ENCODE measurements at regions of chr12 and their contacts with region 1.

Region 1: GRCh38 chr12:11730299-11731041 is 81.0 kb downstream of the ETV6 start:
- DNase-seq: peak; percentile 41
- ATAC-seq: peak; percentile 78
- H3K4me3 Mint-ChIP-seq: peak overlapping the region; percentile 74
- H3K27ac Mint-ChIP-seq: peak overlapping the region; percentile 89
- H3K4me1 Mint-ChIP-seq: peaks cover 96% of the 10 kb centered on the region
- H3K27me3 Mint-ChIP-seq: no peaks in the 10 kb centered on the region
- CTCF ChIP-seq: no peak

Region 2: GRCh38 chr12:11638315-11638916 is 92.1 kb before region 1 on chr12:
- CTCF ChIA-PET with region 1: no interaction called
- POLR2A ChIA-PET with region 1: interaction called, 16 read pairs
- intact Hi-C with region 1: no loop called
- DNase-seq: no peak
- ATAC-seq: no peak
- H3K4me3 Mint-ChIP-seq: no peak overlapping the region
- H3K27ac Mint-ChIP-seq: no peak overlapping the region
- H3K4me1 Mint-ChIP-seq: peaks cover 12% of the 10 kb centered on the region
- H3K27me3 Mint-ChIP-seq: no peaks in the 10 kb centered on the region
- CTCF ChIP-seq: no peak

Region 3: GRCh38 chr12:11672256-11673191 is 57.9 kb before region 1 on chr12:
- CTCF ChIA-PET with region 1: no interaction called
- POLR2A ChIA-PET with region 1: no interaction called
- intact Hi-C with region 1: no loop called
- DNase-seq: no peak
- ATAC-seq: no peak
- H3K4me3 Mint-ChIP-seq: no peak overlapping the region
- H3K27ac Mint-ChIP-seq: no peak overlapping the region
- H3K4me1 Mint-ChIP-seq: peaks cover 78% of the 10 kb centered on the region
- H3K27me3 Mint-ChIP-seq: no peaks in the 10 kb centered on the region
- CTCF ChIP-seq: no peak

Region 4: DNA sequence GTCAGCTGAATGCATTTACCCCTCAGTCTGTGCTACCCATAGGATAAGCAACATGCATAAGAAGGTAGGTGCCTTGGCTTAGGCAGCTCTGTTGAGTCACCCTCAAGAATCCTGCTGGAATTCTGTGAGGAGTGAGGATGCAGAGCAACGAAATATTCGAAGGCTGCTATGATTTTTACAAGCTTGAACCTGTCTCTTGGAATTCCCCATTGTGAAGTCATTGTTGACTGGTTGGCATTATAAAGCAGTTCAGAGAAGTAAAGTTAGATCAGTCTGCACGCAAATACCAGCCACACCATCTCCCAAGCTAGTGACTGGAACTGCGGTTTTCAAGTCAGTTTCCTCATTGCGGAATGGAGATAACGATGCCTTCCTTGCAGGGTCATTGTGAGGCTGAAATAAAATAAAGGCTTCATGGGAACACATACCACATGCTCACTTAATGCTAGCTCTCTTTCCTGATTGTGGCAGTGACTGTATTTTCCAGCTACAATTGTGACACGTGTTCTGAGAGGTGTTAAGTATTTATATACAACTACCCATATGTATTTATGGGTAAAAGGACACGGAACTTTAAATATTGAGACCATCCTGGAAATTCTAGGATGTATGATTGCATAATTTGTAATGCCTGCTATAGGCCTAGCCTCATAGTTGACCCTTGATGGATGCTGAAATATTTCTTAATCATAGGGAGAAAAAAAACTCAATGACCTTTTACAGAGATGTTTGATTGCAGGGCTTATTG is 15.7 kb after region 1 on chr12:
- CTCF ChIA-PET with region 1: interaction called, 8 read pairs
- POLR2A ChIA-PET with region 1: interaction called, 249 read pairs
- intact Hi-C with region 1: loop called (anchors 1 kb)
- DNase-seq: no peak
- ATAC-seq: peak; percentile 73
- H3K4me3 Mint-ChIP-seq: peak overlapping the region; percentile 67
- H3K27ac Mint-ChIP-seq: peak overlapping the region; percentile 93
- H3K4me1 Mint-ChIP-seq: peaks cover 97% of the 10 kb centered on the region
- H3K27me3 Mint-ChIP-seq: no peaks in the 10 kb centered on the region
- CTCF ChIP-seq: no peak

Region 5: DNA sequence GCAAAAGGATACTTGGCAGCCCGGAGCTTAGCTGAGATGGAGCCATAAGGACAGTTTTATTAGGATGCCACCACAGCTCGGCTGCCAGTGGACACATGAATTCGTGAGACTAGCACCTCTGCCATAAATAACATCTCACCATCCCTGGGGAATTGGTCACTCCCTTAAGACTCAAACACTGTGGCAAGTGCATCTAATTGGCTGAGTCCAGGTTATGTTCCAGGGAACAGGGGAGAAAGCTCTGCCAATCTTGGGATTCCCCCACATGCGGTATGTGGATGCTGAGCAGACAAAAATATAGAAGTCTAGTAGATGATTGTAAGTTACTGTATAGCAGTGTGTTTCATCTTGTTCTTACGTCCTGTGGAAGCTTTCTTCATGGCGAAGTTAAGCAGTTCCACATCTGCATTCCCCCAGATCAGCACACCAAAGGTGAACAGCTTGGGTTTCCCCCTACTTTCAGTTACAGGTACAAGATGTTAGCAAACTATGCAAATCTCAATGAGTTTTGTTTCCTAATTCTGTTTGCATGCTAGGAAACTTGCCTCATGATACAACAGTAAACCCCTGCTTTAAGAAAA is 50.1 kb after region 1 on chr12:
- CTCF ChIA-PET with region 1: interaction called, 3 read pairs
- POLR2A ChIA-PET with region 1: interaction called, 25 read pairs
- intact Hi-C with region 1: no loop called
- DNase-seq: no peak
- ATAC-seq: peak; percentile 76
- H3K4me3 Mint-ChIP-seq: peak overlapping the region; percentile 24
- H3K27ac Mint-ChIP-seq: peak overlapping the region; percentile 68
- H3K4me1 Mint-ChIP-seq: peaks cover 50% of the 10 kb centered on the region
- H3K27me3 Mint-ChIP-seq: no peaks in the 10 kb centered on the region
- CTCF ChIP-seq: no peak

Region 6: GRCh38 chr12:11798856-11799501 is 68.5 kb after region 1 on chr12:
- CTCF ChIA-PET with region 1: no interaction called
- POLR2A ChIA-PET with region 1: no interaction called
- intact Hi-C with region 1: no loop called
- DNase-seq: no peak
- ATAC-seq: no peak
- H3K4me3 Mint-ChIP-seq: no peak overlapping the region
- H3K27ac Mint-ChIP-seq: peak overlapping the region; percentile 57
- H3K4me1 Mint-ChIP-seq: peaks cover 51% of the 10 kb centered on the region
- H3K27me3 Mint-ChIP-seq: no peaks in the 10 kb centered on the region
- CTCF ChIP-seq: no peak

Region 7: DNA sequence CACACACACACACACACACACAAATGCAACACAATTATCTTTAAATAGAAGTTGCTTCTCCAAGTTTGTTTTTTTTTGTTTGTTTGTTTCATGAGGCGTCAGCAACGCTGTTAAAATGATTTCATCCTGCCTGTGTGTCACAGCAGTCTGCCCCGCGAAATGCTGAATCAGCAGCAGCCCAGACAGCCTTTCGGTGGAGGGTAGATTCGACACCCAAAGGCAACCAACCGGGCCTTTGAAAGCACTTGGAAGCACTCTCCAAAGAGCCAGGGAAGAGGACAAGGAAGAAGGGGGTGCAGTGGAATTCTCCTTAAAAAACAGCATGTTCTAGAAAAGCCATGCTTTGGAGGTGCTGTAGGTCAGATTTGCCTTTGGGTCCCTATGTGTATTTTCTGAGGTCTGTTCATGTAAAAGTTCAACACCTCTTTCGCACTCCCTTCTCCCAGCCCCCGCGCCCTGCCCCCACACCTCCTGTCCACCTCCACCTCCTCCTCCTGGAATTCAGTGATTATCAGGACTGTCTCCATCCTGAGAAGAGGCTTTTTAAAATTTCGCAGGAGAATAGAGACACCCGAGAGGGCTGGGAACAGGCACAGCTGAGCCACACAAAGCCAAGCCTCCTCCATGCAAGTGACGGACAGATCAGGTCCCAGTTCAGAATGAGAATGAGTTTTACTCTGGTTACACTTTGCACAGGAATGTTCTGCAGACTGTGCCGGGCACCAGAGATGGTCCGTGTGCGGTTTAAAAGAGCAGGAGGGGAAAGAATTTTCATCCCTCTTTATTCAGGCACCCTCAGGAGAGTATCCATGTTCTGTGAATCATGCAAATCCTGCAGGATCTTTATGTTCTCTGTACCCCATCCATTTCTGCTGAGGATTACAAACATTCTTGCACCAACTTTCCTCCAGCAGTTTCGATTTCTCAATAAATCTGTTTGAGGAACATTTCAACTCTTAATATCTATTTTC is 96.9 kb after region 1 on chr12:
- CTCF ChIA-PET with region 1: no interaction called
- POLR2A ChIA-PET with region 1: interaction called, 13 read pairs
- intact Hi-C with region 1: no loop called
- DNase-seq: no peak
- ATAC-seq: no peak
- H3K4me3 Mint-ChIP-seq: no peak overlapping the region
- H3K27ac Mint-ChIP-seq: no peak overlapping the region
- H3K4me1 Mint-ChIP-seq: peaks cover 47% of the 10 kb centered on the region
- H3K27me3 Mint-ChIP-seq: no peaks in the 10 kb centered on the region
- CTCF ChIP-seq: no peak

Region 8: DNA sequence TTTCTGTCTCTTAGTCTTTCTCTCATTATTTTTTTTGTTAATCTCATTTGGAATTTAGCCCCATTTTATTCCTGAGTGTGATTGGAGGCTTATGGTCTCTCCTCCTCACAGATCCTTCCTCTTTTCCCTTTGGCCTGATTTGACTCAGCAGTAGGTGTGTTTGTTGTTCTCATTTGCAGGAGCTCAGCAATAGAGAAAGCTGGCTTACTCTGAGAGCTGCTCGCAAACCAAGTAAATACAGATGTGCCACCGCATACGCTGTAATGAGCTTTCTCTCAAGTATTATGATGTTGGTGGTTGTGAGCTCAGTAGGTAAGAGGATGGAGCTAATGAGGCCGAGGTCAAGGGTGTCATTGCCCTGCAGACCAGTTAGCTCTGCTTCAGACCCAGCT is 125.5 kb after region 1 on chr12:
- CTCF ChIA-PET with region 1: no interaction called
- POLR2A ChIA-PET with region 1: interaction called, 14 read pairs
- intact Hi-C with region 1: no loop called
- DNase-seq: no peak
- ATAC-seq: peak; percentile 39
- H3K4me3 Mint-ChIP-seq: peak overlapping the region; percentile 67
- H3K27ac Mint-ChIP-seq: peak overlapping the region; percentile 81
- H3K4me1 Mint-ChIP-seq: peaks cover 35% of the 10 kb centered on the region
- H3K27me3 Mint-ChIP-seq: no peaks in the 10 kb centered on the region
- CTCF ChIP-seq: no peak

Region 9: GRCh38 chr12:12696562-12697383 is 966.3 kb after region 1 on chr12:
- CTCF ChIA-PET with region 1: no interaction called
- POLR2A ChIA-PET with region 1: interaction called, 13 read pairs
- intact Hi-C with region 1: no loop called
- DNase-seq: peak; percentile 78
- ATAC-seq: peak; percentile 80
- H3K4me3 Mint-ChIP-seq: peak overlapping the region; percentile 96
- H3K27ac Mint-ChIP-seq: peak overlapping the region; percentile 99
- H3K4me1 Mint-ChIP-seq: peaks cover 33% of the 10 kb centered on the region
- H3K27me3 Mint-ChIP-seq: no peaks in the 10 kb centered on the region
- CTCF ChIP-seq: no peak